ENCODE measurements at regions of chr7 and their contacts with region 1.

Region 1: DNA sequence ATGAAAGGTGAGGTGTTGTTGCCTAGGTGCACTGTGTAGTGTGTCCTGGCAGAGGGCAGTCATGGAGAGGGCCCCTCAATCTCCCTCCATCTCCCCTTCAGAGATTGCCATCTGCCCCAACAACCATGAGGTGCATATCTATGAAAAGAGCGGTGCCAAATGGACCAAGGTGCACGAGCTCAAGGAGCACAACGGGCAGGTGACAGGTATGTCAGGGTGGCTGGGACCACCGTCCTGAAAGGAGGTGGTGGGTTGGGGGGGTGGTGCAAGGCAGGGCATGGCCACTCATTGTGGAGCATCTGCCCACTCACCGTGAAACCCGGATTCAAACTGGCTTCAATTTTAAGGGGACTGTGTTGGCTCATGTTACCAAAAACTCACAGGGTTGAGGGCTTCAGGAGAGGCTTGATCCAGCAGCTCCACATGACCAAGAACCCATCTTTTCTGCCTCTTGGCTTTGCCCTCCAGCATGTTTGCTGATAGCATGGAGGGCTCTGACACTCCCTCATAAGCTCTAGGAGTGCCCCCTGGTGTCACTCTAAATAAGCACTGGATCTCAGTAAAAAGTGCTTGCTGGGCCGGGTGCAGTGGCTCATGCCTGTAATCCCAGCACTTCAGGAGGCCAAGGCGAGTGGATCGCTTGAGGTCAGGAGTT is 12.2 kb downstream of the ARPC1B start:
- DNase-seq: peak; percentile 66
- ATAC-seq: peak; percentile 75
- H3K4me3 Mint-ChIP-seq: no peak overlapping the region
- H3K27ac Mint-ChIP-seq: peak overlapping the region; percentile 34
- H3K4me1 Mint-ChIP-seq: peaks cover 33% of the 10 kb centered on the region
- H3K27me3 Mint-ChIP-seq: no peaks in the 10 kb centered on the region

Region 2: GRCh38 chr7:99364961-99365817 is 21.5 kb before region 1 on chr7:
- CTCF ChIA-PET with region 1: interaction called, 10 read pairs
- POLR2A ChIA-PET with region 1: interaction called, 5 read pairs
- DNase-seq: peak; percentile 70
- ATAC-seq: peak; percentile 85
- H3K4me3 Mint-ChIP-seq: no peak overlapping the region
- H3K27ac Mint-ChIP-seq: no peak overlapping the region
- H3K4me1 Mint-ChIP-seq: peaks cover 22% of the 10 kb centered on the region
- H3K27me3 Mint-ChIP-seq: no peaks in the 10 kb centered on the region